ENCODE measurements at regions of chr19 and their contacts with region 1.

Region 1: DNA sequence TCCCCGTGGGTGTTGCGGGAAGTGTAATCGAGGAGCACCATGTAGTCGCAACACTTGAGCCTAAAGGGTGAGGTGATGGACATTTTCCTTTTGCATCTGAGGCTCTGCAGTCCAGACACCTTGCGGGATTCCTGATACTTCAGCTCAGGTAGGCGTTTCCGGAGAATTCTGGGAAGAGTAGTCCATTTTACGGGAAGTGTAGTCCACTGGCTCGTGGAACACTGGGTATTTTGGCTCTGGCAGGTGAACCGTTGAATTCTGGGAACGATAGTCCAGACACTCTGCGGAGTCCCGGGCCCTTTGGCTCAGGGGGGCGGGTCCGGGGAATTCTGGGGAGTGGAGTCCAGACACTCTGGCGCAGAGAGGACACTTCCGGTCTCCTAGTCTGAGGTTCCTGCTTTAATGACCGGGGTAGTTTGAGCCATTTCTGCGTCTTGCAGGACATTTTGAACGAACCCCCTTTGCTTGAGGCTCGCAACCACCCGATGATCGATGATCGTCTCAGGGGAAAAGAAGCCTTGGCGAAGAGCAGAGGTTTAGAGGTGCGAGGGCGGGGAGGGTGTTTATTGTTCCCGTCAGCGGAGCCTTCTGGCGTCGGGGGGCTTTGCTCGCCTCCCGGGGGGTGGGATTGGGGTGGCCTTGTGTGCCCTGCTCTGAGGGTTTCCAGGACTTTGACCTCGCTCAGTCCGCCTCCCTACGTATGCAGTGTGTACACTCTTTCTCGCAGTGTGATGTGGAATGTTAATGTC is at the start of gene ZNF223:
- DNase-seq: peak; percentile 90 to 98 (median 96)
- H3K4me3 ChIP-seq: peak within 1 kb of the TSS; percentile 59 to 95 (median 83)
- H3K27ac ChIP-seq: peak within 1 kb of the TSS in 51 of 59 donors; percentile 7 to 88 (median 71)
- H3K27me3 ChIP-seq: peaks cover 0 to 17% (median 0%) of the 10 kb centered on the region in 45 donors
- CTCF ChIP-seq: peak in 21 of 56 donors; percentile 7 to 45 (median 28)
- total RNA-seq, gene ZNF223: 5.2 to 18.6 (median 10.3) TPM

Region 2: GRCh38 chr19:43784981-43785808 is 266.6 kb before region 1 on chr19:
- intact Hi-C with region 1: no loop called
- DNase-seq: peak in 2 of 10 donors; percentile 40 to 46
- H3K4me3 ChIP-seq: peak overlapping the region in 4 of 59 donors; percentile 7 to 32 (median 16)
- H3K27ac ChIP-seq: peak overlapping the region in 3 of 59 donors; percentile 21 to 40 (median 38)
- H3K27me3 ChIP-seq: peaks cover 0 to 6% (median 0%) of the 10 kb centered on the region in 45 donors
- CTCF ChIP-seq: peak; percentile 76 to 97 (median 90)

Region 3: GRCh38 chr19:43983912-43984686 is 67.7 kb before region 1 on chr19 and contains the start of gene ZNF155:
- intact Hi-C with region 1: loop called in 1 of 2 experiments (anchors 1 kb)
- DNase-seq: peak; percentile 88 to 97 (median 95)
- H3K4me3 ChIP-seq: peak within 1 kb of the TSS; percentile 43 to 86 (median 73)
- H3K27ac ChIP-seq: peak within 1 kb of the TSS in 42 of 59 donors; percentile 1 to 84 (median 50)
- H3K27me3 ChIP-seq: no peaks in the 10 kb centered on the region
- CTCF ChIP-seq: peak in 10 of 56 donors; percentile 5 to 35 (median 14)
- total RNA-seq, gene ZNF155: 6.7 to 16.6 (median 10.8) TPM

Region 4: GRCh38 chr19:44071824-44072542 is 20.2 kb after region 1 on chr19 and contains the start of gene ZNF284:
- intact Hi-C with region 1: loop called (anchors 2 kb)
- DNase-seq: peak; percentile 84 to 95 (median 92)
- H3K4me3 ChIP-seq: peak within 1 kb of the TSS; percentile 59 to 96 (median 79)
- H3K27ac ChIP-seq: peak within 1 kb of the TSS in 25 of 59 donors; percentile 3 to 73 (median 46)
- H3K27me3 ChIP-seq: no peaks in the 10 kb centered on the region
- CTCF ChIP-seq: peak in 22 of 56 donors; percentile 3 to 42 (median 21)
- total RNA-seq, gene ZNF284: 2.3 to 6.7 (median 4.1) TPM

Region 5: GRCh38 chr19:44093931-44094765 is 42.3 kb after region 1 on chr19 and contains the start of gene ZNF224:
- intact Hi-C with region 1: loop called (anchors 1 to 5 kb)
- DNase-seq: peak; percentile 89 to 95 (median 94)
- H3K4me3 ChIP-seq: peak within 1 kb of the TSS; percentile 53 to 96 (median 85)
- H3K27ac ChIP-seq: peak within 1 kb of the TSS in 50 of 59 donors; percentile 1 to 87 (median 68)
- H3K27me3 ChIP-seq: no peaks in the 10 kb centered on the region
- CTCF ChIP-seq: peak in 23 of 56 donors; percentile 8 to 46 (median 25)
- total RNA-seq, gene ZNF224: 25.6 to 58.3 (median 42.2) TPM

Region 6: GRCh38 chr19:44207126-44207803 is 155.4 kb after region 1 on chr19:
- intact Hi-C with region 1: loop called in 1 of 2 experiments (anchors 5 kb)
- DNase-seq: peak; percentile 76 to 91 (median 88)
- H3K4me3 ChIP-seq: peak overlapping the region; percentile 62 to 99 (median 88)
- H3K27ac ChIP-seq: peak overlapping the region; percentile 1 to 98 (median 89)
- H3K27me3 ChIP-seq: peaks cover 0 to 5% (median 0%) of the 10 kb centered on the region in 45 donors
- CTCF ChIP-seq: peak in 21 of 56 donors; percentile 8 to 47 (median 21)